Heart left ventricle (tissue), 16 donors: ENCODE measurements at regions of chr6 and their contacts with region 1.

Region 1: DNA sequence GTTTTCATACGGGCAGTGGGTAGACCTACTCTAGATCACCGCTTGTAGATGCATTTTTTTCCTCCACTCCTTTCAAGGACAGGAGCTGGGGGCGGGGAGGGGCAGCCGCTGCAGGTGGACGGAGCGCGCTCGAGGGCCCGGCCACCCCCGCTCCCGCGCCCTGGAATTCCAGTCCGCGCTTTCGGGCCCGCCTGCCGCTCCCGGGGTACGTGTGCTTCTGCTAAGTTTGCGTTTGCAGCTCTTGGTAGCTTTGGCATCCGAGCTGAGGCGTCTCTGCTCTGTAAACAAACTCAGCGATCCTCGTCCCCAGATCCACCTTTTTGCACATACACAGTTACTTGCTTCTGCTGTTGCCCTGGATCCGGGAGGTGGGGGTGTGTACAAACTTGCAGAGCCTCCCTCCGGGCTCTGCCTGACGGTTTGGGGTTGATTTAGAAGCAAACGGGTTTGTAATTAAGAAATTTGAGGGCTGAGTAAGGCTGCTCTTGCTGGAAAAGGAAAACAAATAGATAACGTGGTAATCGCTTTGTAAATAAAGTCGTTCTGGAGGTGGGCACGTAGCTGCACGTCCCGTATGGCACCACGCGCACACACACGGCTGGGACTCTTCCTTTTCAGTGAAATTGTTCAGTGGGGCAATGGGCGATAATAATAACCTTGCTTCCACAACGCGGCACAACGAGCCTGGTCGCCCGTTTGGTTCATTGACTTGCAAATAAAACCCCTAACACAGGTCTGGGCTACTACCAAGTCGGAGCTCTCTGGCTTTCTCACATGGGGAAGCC is 976 bp upstream of the CITED2 start:
- DNase-seq: peak; percentile 90 to 95 (median 91)
- ATAC-seq: peak; percentile 70 to 82 (median 80)
- H3K4me3 ChIP-seq: peak overlapping the region; percentile 78 to 98 (median 92)
- H3K27ac ChIP-seq: peak overlapping the region; percentile 95 to 100 (median 98)
- H3K4me1 ChIP-seq: peaks cover 0 to 30% (median 15%) of the 10 kb centered on the region in 12 donors
- H3K27me3 ChIP-seq: no peaks in the 10 kb centered on the region
- CTCF ChIP-seq: peak in 1 of 12 donors; percentile 14
- POLR2A ChIP-seq: peak in 1 of 2 donors; percentile 64

Region 2: GRCh38 chr6:139508023-139508422 is 132.6 kb after region 1 on chr6:
- intact Hi-C with region 1: loop called in 5 of 10 experiments (anchors 1 to 10 kb)
- DNase-seq: no peak
- ATAC-seq: no peak
- H3K4me3 ChIP-seq: no peak overlapping the region
- H3K27ac ChIP-seq: no peak overlapping the region
- H3K4me1 ChIP-seq: peaks cover 0 to 2% (median 0%) of the 10 kb centered on the region in 12 donors
- H3K27me3 ChIP-seq: no peaks in the 10 kb centered on the region
- CTCF ChIP-seq: no peak
- POLR2A ChIP-seq: no peak

Region 3: DNA sequence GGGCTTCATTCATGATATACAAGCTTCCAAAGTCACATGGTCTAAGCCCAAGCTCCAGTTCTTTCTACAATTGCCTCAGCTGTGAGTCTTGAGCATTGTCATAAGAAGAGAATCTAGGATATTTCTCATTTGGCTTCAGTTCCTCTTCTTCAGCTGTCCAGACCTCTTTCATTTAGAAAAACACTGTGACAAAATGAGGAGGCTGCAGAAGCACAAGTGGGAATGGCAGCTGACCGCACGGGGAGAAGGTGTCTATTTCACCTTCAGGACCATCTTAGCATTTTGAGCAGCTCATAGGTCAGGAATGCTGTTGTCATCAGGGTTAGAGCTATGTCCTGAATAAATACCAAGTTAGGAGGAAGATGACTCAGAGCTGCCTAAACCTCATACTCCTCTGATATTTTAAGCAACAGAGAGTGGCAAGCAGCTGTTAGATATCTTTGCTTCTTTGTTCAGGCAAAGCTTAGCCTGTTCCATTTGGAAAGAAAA is 389.1 kb after region 1 on chr6:
- intact Hi-C with region 1: loop called in 7 of 10 experiments (anchors 2 to 10 kb)
- DNase-seq: peak in 4 of 5 donors; percentile 36 to 41 (median 40)
- ATAC-seq: peak; percentile 91 to 99 (median 98)
- H3K4me3 ChIP-seq: no peak overlapping the region
- H3K27ac ChIP-seq: peak overlapping the region; percentile 43 to 89 (median 81)
- H3K4me1 ChIP-seq: peaks cover 0 to 42% (median 22%) of the 10 kb centered on the region in 12 donors
- H3K27me3 ChIP-seq: no peaks in the 10 kb centered on the region
- CTCF ChIP-seq: no peak
- POLR2A ChIP-seq: no peak

Region 4: DNA sequence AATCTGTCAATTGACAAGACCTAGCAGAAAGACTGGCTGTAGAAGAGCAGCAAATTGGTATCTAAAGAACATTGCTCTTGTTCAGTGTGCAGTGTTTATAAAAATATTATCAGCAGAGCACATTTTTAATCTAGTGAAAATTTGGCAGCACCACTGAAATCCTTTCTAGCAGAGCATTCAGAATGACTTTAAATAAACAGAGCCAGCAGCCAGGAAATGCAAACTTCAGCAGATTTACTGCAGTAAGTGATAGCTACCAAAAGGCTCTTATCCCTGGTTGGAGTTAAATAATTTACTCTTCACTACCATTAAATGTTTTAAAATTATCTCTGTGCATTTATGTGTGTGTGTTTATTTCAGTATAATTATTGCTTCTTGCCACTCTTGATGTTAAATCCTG is 590.0 kb after region 1 on chr6:
- intact Hi-C with region 1: loop called in 5 of 10 experiments (anchors 5 to 10 kb)
- DNase-seq: no peak
- ATAC-seq: peak; percentile 26 to 62 (median 44)
- H3K4me3 ChIP-seq: no peak overlapping the region
- H3K27ac ChIP-seq: peak overlapping the region in 10 of 12 donors; percentile 3 to 60 (median 40)
- H3K4me1 ChIP-seq: peaks cover 0 to 45% (median 10%) of the 10 kb centered on the region in 12 donors
- H3K27me3 ChIP-seq: no peaks in the 10 kb centered on the region
- CTCF ChIP-seq: no peak
- POLR2A ChIP-seq: no peak

Region 5: GRCh38 chr6:140052756-140053729 is 677.6 kb after region 1 on chr6:
- intact Hi-C with region 1: loop called in 2 of 10 experiments (anchors 10 kb)
- DNase-seq: no peak
- ATAC-seq: peak; percentile 10 to 53 (median 25)
- H3K4me3 ChIP-seq: no peak overlapping the region
- H3K27ac ChIP-seq: peak overlapping the region in 3 of 12 donors; percentile 6 to 32 (median 12)
- H3K4me1 ChIP-seq: peaks cover 0 to 14% (median 0%) of the 10 kb centered on the region in 12 donors
- H3K27me3 ChIP-seq: no peaks in the 10 kb centered on the region
- CTCF ChIP-seq: peak in 8 of 12 donors; percentile 6 to 44 (median 14)
- POLR2A ChIP-seq: no peak

Region 6: GRCh38 chr6:140774080-140774505 is 1398.7 kb after region 1 on chr6:
- intact Hi-C with region 1: loop called in 2 of 10 experiments (anchors 10 kb)
- DNase-seq: peak in 4 of 5 donors; percentile 34 to 44 (median 36)
- ATAC-seq: peak; percentile 95 to 99 (median 98)
- H3K4me3 ChIP-seq: no peak overlapping the region
- H3K27ac ChIP-seq: peak overlapping the region; percentile 29 to 86 (median 64)
- H3K4me1 ChIP-seq: peaks cover 0 to 25% (median 8%) of the 10 kb centered on the region in 12 donors
- H3K27me3 ChIP-seq: no peaks in the 10 kb centered on the region
- CTCF ChIP-seq: no peak
- POLR2A ChIP-seq: no peak